PC-9 (cell line): ENCODE measurements at regions of chr22 and their contacts with region 1.

Region 1: DNA sequence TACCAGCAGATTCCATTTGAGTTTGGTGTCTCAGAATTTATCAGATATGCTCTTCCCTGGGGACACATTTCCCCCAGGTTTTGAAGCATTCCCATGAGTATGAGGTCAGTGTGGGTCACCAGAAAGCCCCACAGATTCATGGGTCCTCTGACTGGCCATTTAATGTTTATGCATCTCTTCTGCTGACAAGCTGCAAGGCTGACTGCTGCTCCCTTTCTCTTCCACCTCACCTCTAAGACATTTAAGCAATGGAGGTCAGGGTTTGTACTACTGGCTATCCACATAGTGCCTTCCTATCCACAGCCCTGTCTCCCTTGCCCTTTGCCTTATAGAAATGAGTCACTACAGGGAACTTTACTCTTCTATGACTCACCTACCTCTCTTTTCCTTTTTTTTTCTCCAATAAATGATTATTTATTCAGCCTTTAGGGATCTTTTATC is 106.0 kb upstream of the TIMP3 start:
- DNase-seq: peak; percentile 73 to 99
- H3K4me3 ChIP-seq: no peak overlapping the region; the same call in 1 of the 2 replicates
- H3K27ac ChIP-seq: peak overlapping the region; percentile 94
- H3K4me1 ChIP-seq: peaks cover 78% of the 10 kb centered on the region
- H3K27me3 ChIP-seq: no peaks in the 10 kb centered on the region
- CTCF ChIP-seq: no peak

Region 2: GRCh38 chr22:32603656-32604435 is 91.6 kb before region 1 on chr22:
- CTCF ChIA-PET with region 1: no interaction called
- POLR2A ChIA-PET with region 1: no interaction called
- intact Hi-C with region 1: loop called (anchors 5 kb)
- DNase-seq: no peak
- H3K4me3 ChIP-seq: no peak overlapping the region
- H3K27ac ChIP-seq: no peak overlapping the region; the same call in 1 of the 2 replicates
- H3K4me1 ChIP-seq: peaks cover 24% of the 10 kb centered on the region
- H3K27me3 ChIP-seq: no peaks in the 10 kb centered on the region
- CTCF ChIP-seq: no peak

Region 3: GRCh38 chr22:32781695-32782094 is 86.2 kb after region 1 on chr22:
- CTCF ChIA-PET with region 1: interaction called, 4 read pairs
- POLR2A ChIA-PET with region 1: interaction called, 4 read pairs
- intact Hi-C with region 1: loop called (anchors 5 kb)
- DNase-seq: no peak
- H3K4me3 ChIP-seq: no peak overlapping the region
- H3K27ac ChIP-seq: no peak overlapping the region
- H3K4me1 ChIP-seq: peaks cover 47% of the 10 kb centered on the region
- H3K27me3 ChIP-seq: no peaks in the 10 kb centered on the region
- CTCF ChIP-seq: no peak

Region 4: GRCh38 chr22:32803020-32803754 is 107.7 kb after region 1 on chr22:
- CTCF ChIA-PET with region 1: no interaction called
- POLR2A ChIA-PET with region 1: interaction called, 12 read pairs
- intact Hi-C with region 1: loop called (anchors 5 kb)
- DNase-seq: peak; percentile 52 to 69
- H3K4me3 ChIP-seq: peak overlapping the region; percentile 99
- H3K27ac ChIP-seq: peak overlapping the region; percentile 49
- H3K4me1 ChIP-seq: peaks cover 53% of the 10 kb centered on the region
- H3K27me3 ChIP-seq: no peaks in the 10 kb centered on the region
- CTCF ChIP-seq: no peak

Region 5: DNA sequence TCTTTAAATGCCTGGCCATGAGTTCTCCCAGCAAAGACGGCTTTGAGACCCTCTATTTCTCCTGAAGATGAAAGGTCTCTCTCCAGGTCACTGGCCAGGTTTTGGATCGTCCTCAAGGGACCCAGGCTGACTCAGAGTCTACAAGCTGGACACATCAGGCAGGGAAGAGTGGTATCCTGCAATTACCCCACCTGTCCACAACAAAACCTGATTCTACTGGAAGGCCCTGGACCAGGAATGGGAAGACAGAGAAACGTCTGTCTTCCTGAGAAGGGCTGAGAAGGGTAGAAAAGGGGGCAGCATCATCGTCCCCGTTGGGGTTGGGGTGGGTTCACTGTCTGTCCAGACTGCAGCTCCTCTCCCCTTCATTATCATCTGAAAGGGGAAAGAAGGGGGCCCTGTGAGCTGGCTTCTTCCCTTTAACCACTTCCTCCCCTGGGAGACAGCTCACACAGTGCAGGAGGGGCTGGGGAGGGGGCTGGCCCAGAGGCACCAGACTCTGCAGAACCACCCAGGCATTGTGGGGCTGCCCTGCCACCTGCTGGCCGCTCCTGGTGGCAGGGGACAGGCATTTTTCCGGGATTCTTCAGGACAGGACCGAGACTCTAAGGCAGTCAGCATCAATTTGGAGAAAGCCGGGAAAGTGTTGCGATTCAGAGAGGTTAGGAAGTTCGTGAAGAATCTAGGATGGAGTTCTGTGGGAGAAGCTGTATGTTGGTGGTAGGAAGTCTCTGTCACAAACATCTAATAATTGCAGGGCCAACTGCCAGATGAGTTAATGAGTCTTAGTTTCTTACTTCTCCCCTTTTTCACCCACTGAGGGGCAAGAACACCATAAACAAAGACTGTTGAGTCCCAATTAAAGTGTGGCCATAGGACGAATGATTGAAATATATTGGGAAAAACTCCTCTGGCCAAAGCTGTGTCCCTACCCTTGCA is 305.1 kb after region 1 on chr22:
- CTCF ChIA-PET with region 1: no interaction called
- POLR2A ChIA-PET with region 1: no interaction called
- intact Hi-C with region 1: no loop called
- DNase-seq: peak in 1 of 2 experiments; percentile 60
- H3K4me3 ChIP-seq: no peak overlapping the region
- H3K27ac ChIP-seq: no peak overlapping the region
- H3K4me1 ChIP-seq: peaks cover 27% of the 10 kb centered on the region
- H3K27me3 ChIP-seq: no peaks in the 10 kb centered on the region
- CTCF ChIP-seq: peak; percentile 97